Activated B cell treated with CpG ODN at 0.5 μM for 24 hours (primary cell): ENCODE measurements at regions of chr9 and their contacts with region 1.

Region 1: GRCh38 chr9:121322037-121322775 is 47.8 kb downstream of the STOM start:
- DNase-seq: no peak
- ATAC-seq: no peak
- H3K4me3 Mint-ChIP-seq: no peak overlapping the region
- H3K27ac Mint-ChIP-seq: no peak overlapping the region
- H3K4me1 Mint-ChIP-seq: no peaks in the 10 kb centered on the region
- H3K27me3 Mint-ChIP-seq: no peaks in the 10 kb centered on the region
- CTCF ChIP-seq: no peak

Region 2: GRCh38 chr9:121107041-121107440 is 215.2 kb before region 1 on chr9:
- CTCF ChIA-PET with region 1: no interaction called
- POLR2A ChIA-PET with region 1: no interaction called
- intact Hi-C with region 1: loop called (anchors 2 kb)
- DNase-seq: no peak
- ATAC-seq: peak; percentile 54
- H3K4me3 Mint-ChIP-seq: no peak overlapping the region
- H3K27ac Mint-ChIP-seq: peak overlapping the region; percentile 19
- H3K4me1 Mint-ChIP-seq: peaks cover 23% of the 10 kb centered on the region
- H3K27me3 Mint-ChIP-seq: no peaks in the 10 kb centered on the region
- CTCF ChIP-seq: no peak

Region 3: DNA sequence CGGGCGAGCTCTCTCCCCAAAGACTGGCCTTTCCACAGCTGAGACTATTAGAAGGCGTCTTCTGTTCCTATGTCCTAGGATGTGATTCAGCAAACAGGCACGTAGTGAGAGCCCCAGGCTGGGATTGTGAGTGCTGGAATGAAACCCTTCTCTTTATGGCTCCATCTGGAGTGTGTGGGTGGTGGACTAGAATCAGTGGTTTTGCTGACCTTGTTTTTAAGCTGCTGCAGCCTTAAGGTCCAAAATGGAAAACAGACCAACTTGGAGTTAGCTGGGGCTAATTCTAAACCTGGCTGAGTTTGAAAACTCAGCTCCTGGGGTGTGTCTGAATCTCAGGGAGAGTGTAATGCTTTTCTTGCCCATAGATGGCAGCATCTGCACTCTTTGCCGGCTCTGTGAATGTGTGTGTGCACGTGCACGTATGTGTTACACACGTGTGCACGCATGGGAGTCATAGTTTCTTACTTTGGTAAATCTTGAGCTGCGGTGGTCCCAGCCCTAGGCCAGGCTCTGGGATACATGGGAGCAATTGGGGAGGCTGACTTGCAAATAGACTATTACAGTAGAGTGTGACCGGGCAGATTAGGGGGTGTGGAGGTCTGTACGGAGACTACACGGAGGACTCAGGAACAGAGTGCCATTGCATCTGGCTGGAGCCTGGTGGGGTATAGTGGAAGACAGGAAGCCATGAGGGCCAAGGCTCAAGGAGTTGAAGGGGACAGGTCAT is 43.5 kb before region 1 on chr9:
- CTCF ChIA-PET with region 1: interaction called, 8 read pairs
- POLR2A ChIA-PET with region 1: no interaction called
- intact Hi-C with region 1: loop called (anchors 1 kb)
- DNase-seq: no peak
- ATAC-seq: peak; percentile 84
- H3K4me3 Mint-ChIP-seq: no peak overlapping the region
- H3K27ac Mint-ChIP-seq: no peak overlapping the region
- H3K4me1 Mint-ChIP-seq: peaks cover 23% of the 10 kb centered on the region
- H3K27me3 Mint-ChIP-seq: no peaks in the 10 kb centered on the region
- CTCF ChIP-seq: peak; percentile 22

Region 4: GRCh38 chr9:121376214-121376830 is 54.1 kb after region 1 on chr9:
- CTCF ChIA-PET with region 1: interaction called, 13 read pairs
- POLR2A ChIA-PET with region 1: no interaction called
- intact Hi-C with region 1: loop called (anchors 1 kb)
- DNase-seq: no peak
- ATAC-seq: no peak
- H3K4me3 Mint-ChIP-seq: no peak overlapping the region
- H3K27ac Mint-ChIP-seq: no peak overlapping the region
- H3K4me1 Mint-ChIP-seq: peaks cover 5% of the 10 kb centered on the region
- H3K27me3 Mint-ChIP-seq: no peaks in the 10 kb centered on the region
- CTCF ChIP-seq: no peak

Region 5: GRCh38 chr9:121445981-121446380 is 123.8 kb after region 1 on chr9:
- CTCF ChIA-PET with region 1: no interaction called
- POLR2A ChIA-PET with region 1: no interaction called
- intact Hi-C with region 1: no loop called
- DNase-seq: no peak
- ATAC-seq: no peak
- H3K4me3 Mint-ChIP-seq: no peak overlapping the region
- H3K27ac Mint-ChIP-seq: no peak overlapping the region
- H3K4me1 Mint-ChIP-seq: no peaks in the 10 kb centered on the region
- H3K27me3 Mint-ChIP-seq: peaks cover 16% of the 10 kb centered on the region
- CTCF ChIP-seq: no peak

Region 6: DNA sequence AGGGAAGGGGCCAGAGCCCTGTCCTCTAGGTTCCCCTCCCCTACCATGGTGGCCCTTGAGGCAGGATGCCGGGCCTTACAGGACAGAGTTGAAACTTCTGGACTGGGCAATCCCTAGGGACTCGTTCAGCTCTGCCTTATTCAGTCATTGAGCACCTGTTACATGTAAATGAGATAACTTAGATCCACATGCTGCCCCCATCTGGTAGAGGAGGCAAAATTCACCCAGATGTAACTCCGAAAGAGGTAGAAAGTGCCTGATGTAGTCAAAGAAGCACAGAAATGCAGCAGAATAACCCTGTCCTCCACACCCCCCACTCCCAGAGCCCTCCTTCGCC is 175.9 kb after region 1 on chr9:
- CTCF ChIA-PET with region 1: no interaction called
- POLR2A ChIA-PET with region 1: no interaction called
- intact Hi-C with region 1: loop called (anchors 1 kb)
- DNase-seq: peak; percentile 22
- ATAC-seq: peak; percentile 87
- H3K4me3 Mint-ChIP-seq: peak overlapping the region; percentile 79
- H3K27ac Mint-ChIP-seq: no peak overlapping the region
- H3K4me1 Mint-ChIP-seq: peaks cover 45% of the 10 kb centered on the region
- H3K27me3 Mint-ChIP-seq: peaks cover 28% of the 10 kb centered on the region
- CTCF ChIP-seq: no peak